ENCODE measurements at regions of chr11 and their contacts with region 1.

Region 1: DNA sequence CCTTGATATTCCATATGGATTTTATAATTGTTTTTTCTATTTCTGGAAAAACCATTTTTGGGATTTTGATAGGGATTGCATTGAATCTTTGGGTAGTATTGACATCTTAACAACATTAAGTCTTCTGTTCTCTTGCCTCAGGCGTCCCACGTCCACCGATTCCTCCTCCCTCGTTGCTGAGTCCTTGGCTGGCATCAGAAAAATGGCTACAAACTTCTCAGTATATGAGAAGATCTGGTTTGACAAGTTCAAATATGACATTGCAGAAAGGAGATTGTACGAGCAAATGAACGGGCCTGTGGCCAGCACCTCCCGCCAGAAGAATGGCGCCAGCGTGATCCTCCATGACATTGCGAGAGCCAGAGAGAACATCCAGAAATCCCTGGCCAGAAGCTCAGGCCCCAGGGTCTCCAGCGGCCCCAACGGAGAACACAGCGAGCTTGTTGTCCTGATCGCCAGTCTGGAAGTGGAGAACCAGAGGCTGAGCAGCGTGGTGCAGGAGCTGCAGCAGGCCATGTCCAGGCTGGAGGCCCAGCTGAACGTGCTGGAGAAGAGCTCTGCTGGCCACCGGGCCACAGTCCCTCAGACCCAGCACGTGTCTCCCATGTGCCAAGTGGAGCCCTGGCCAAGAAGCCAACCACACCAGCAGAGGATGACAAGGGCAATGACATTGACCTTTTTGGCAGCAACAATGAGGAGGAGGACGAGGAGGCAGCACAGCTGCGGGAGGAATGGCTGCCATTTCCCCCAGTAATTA is 20.7 kb upstream of the SCGB1D1 start:
- DNase-seq: no peak
- H3K4me3 ChIP-seq: no peak overlapping the region
- H3K27ac ChIP-seq: no peak overlapping the region
- H3K4me1 ChIP-seq: no peaks in the 10 kb centered on the region
- CTCF ChIP-seq: no peak

Region 2: DNA sequence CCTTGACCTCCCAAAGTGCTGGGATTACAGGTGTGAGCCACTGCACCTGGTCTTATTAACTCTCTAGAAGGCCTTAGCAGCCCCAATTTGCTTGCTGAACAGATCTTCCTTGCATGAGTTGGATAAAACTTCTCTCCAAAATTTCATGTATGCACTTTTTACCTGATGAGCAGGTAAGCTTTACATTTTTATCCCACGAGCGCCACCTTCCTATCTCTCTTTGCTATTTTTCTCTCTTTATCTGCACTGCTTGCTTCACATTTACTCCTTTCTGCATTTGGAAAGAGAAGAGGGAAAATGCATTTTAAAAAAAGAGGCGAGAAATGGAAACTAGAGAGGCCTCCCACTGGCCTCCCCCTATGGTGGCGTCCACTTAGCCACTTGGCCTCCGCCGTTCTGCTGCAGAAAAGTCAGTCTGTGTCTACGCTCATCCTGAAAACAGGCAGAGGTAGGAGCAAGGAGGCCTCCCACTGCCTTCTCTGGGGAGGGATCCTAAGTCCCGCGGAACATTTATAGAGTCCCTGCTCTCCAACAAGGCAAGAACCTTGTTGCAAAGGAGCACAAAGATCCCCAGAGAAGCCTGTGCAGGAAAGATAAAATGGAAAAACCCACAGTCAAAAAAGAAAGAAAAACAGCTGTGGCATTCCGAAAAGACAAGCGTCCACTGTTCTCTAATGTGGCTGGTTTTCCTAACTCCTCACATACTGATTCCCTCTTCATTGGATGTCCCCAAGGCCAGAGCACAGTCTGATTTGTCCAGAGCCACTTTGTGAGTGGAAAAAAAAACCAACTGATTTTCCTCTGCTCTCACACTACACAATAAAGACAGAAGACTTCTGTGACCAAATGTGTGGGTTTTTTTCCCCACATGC is 107.7 kb before region 1 on chr11:
- CTCF ChIA-PET with region 1: no interaction called
- POLR2A ChIA-PET with region 1: no interaction called
- intact Hi-C with region 1: no loop called
- DNase-seq: no peak
- H3K4me3 ChIP-seq: no peak overlapping the region
- H3K27ac ChIP-seq: no peak overlapping the region
- H3K4me1 ChIP-seq: no peaks in the 10 kb centered on the region
- CTCF ChIP-seq: no peak

Region 3: GRCh38 chr11:62186195-62186594 is 16.9 kb after region 1 on chr11:
- CTCF ChIA-PET with region 1: no interaction called
- POLR2A ChIA-PET with region 1: no interaction called
- intact Hi-C with region 1: no loop called
- DNase-seq: no peak
- H3K4me3 ChIP-seq: no peak overlapping the region
- H3K27ac ChIP-seq: no peak overlapping the region
- H3K4me1 ChIP-seq: peaks cover 6% of the 10 kb centered on the region
- CTCF ChIP-seq: no peak

Region 4: DNA sequence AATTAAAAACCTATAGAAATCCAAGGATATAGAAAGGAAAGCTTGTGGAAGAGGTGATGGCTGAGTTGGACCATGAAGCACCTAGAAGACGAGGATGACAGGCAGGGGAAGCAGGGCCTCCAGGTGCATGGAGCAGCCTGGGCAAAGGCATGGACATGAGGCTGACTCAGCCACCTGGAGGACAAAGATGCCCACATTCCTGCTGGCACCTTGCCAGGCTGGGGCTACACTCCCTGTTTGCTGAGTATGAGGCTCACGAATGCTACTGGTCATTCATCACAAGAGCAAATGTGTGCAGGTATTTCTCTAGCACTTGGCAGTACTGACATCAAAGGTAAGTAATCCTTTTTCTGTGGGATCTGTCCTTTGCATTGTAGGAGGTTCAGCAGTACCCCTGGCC is 32.1 kb after region 1 on chr11:
- CTCF ChIA-PET with region 1: no interaction called
- POLR2A ChIA-PET with region 1: no interaction called
- intact Hi-C with region 1: loop called (anchors 2 kb)
- DNase-seq: no peak
- H3K4me3 ChIP-seq: no peak overlapping the region
- H3K27ac ChIP-seq: no peak overlapping the region
- H3K4me1 ChIP-seq: peaks cover 27% of the 10 kb centered on the region
- CTCF ChIP-seq: no peak

Region 5: DNA sequence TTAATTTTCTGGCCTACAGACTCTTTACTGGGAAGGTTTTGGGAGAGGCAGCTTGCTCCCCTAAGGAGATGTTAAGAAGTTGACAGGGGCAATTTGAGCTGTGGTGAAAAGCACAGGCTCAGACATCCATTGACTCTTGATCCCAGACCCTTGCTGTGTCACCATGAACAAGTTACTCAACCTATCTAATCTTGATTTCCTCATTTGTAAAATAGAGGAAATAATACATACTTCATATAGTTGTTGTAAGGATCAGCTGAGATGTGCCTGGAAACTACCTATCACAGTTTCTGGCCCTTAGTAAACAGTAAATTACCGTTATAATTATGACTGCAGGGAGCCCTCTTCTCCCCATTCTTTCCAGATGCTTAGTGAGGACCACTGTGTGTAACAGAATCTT is 146.2 kb after region 1 on chr11:
- CTCF ChIA-PET with region 1: no interaction called
- POLR2A ChIA-PET with region 1: no interaction called
- intact Hi-C with region 1: loop called (anchors 1 kb)
- DNase-seq: no peak
- H3K4me3 ChIP-seq: no peak overlapping the region
- H3K27ac ChIP-seq: no peak overlapping the region
- H3K4me1 ChIP-seq: no peaks in the 10 kb centered on the region
- CTCF ChIP-seq: no peak

Measured in OCI-LY7 (cell line).